A673 (cell line): ENCODE measurements at regions of chr9 and their contacts with region 1.

Region 1: DNA sequence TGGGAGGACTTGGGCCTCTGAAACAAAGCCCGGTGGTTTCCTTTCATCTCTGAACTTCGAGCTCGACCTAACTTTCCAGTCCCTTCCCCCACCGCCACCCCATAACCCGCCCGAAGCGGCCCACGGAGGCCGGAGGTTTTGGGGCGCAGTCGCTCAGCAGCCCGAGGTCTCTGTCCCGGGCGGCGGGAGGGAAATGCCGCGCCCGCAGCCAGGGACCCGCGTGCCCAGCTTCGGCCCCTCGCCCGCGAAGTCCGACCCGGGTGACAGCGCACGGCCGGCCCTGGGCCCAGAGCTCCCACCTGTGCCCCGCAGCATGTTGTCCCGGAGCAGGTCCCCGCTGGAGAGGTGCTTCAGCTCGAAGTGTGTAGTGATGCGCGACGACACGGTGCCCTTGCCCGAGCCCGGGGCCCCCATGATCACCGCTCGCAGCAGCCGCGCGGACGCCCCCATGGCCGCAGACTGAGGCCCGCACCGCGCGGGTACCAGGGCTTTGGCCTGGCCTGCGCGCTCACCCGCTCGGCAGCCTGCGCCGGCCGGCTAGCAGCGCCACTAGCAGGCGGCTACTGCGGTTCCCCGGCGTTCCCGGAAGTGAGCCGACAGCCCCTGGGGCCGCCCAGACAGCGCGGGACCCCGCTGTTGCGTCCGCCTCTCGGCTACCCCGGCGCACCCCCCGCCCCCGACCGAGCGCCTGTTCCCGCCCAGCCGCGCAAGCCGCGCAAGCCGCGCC is at the start of gene AK3:
- DNase-seq: peak; percentile 95
- H3K4me3 ChIP-seq: peak within 1 kb of the TSS; percentile 98
- H3K27ac ChIP-seq: peak within 1 kb of the TSS; percentile 93
- H3K4me1 ChIP-seq: peaks cover 19% of the 10 kb centered on the region
- H3K27me3 ChIP-seq: no peaks in the 10 kb centered on the region
- CTCF ChIP-seq: peak; percentile 37; the same call in 1 of the 2 replicates
- total RNA-seq, gene AK3: 93.1 and 93.6 TPM in 2 replicates

Region 2: GRCh38 chr9:4604678-4605095 is 136.1 kb before region 1 on chr9:
- CTCF ChIA-PET with region 1: no interaction called
- POLR2A ChIA-PET with region 1: no interaction called
- intact Hi-C with region 1: loop called (anchors 10 kb)
- DNase-seq: peak; percentile 88
- H3K4me3 ChIP-seq: no peak overlapping the region
- H3K27ac ChIP-seq: peak overlapping the region; percentile 67
- H3K4me1 ChIP-seq: no peaks in the 10 kb centered on the region
- H3K27me3 ChIP-seq: no peaks in the 10 kb centered on the region
- CTCF ChIP-seq: peak; percentile 83

Region 3: GRCh38 chr9:4662108-4662988 is 78.5 kb before region 1 on chr9 and contains the start of gene PLPP6:
- CTCF ChIA-PET with region 1: interaction called, 3 read pairs
- POLR2A ChIA-PET with region 1: no interaction called
- intact Hi-C with region 1: loop called (anchors 2 kb)
- DNase-seq: peak; percentile 93
- H3K4me3 ChIP-seq: peak within 1 kb of the TSS; percentile 79
- H3K27ac ChIP-seq: peak within 1 kb of the TSS; percentile 98
- H3K4me1 ChIP-seq: peaks cover 28% of the 10 kb centered on the region
- H3K27me3 ChIP-seq: no peaks in the 10 kb centered on the region
- CTCF ChIP-seq: peak; percentile 57
- total RNA-seq, gene PLPP6: 30.9 and 39.5 TPM in 2 replicates

Region 4: DNA sequence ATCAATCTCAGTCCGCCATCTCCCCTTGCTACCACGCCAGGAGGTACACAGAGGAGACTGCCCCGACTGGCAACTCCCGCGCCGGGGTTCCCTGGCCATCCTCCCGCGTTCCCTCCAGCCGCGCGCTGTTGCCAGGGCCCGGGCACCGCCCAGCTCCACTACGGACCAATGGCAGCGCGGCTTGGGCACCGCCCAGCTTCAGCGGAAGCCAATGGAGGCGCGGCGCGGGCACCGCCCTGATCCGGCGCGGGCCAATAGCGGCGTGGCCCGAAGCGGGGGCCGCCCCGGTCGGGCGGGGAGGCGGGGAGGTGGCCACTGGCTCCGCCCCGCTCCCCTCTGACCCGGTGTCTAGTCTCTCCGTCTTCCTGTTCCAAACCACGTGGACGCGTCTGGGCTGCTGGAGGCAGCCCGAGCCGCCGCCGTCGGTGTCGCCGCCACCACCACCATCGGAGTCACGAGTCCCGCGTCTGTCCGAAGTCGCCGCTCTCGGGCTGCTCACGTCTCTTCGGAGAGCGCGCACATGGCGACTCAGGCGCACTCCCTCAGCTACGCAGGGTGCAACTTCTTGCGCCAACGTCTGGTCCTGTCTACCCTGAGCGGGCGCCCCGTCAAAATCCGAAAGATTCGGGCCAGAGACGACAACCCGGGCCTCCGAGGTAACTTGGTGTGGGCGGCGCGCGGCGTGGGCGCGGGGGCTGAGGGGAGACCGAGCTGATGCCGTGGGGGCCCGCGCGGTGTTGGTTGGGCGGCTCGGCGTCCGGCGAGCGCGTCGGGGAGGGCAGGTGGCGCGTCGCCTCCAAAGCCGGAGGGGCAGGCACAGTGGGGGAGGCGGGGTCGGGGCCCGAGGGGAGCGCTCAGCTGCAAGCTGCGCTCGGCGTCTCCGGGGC is 52.0 kb after region 1 on chr9 and contains the start of gene RCL1:
- CTCF ChIA-PET with region 1: no interaction called
- POLR2A ChIA-PET with region 1: no interaction called
- intact Hi-C with region 1: loop called (anchors 5 kb)
- DNase-seq: peak; percentile 98
- H3K4me3 ChIP-seq: peak within 1 kb of the TSS; percentile 93
- H3K27ac ChIP-seq: peak within 1 kb of the TSS; percentile 78
- H3K4me1 ChIP-seq: peaks cover 10% of the 10 kb centered on the region
- H3K27me3 ChIP-seq: no peaks in the 10 kb centered on the region
- CTCF ChIP-seq: no peak
- total RNA-seq, gene RCL1: 29.1 and 31.2 TPM in 2 replicates

Region 5: DNA sequence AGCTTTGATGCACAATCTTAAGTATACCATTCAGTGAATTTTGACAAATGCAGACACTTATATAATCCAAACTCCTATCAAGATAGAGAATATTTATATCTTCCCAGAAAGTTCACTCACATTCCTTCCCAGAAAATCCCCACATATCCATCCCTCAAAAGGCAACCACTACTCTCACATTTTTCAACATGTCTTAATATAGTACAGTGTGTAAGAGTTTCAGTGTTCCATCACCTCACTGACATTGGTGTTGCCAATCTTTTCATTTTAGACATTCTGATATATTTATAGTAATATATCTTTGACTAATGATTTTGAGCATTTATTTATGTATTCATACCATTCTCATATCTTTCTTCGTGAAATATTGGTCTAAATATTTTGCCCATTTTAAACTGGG is 206.1 kb after region 1 on chr9:
- CTCF ChIA-PET with region 1: no interaction called
- POLR2A ChIA-PET with region 1: no interaction called
- intact Hi-C with region 1: no loop called
- DNase-seq: no peak
- H3K4me3 ChIP-seq: no peak overlapping the region
- H3K27ac ChIP-seq: no peak overlapping the region
- H3K4me1 ChIP-seq: no peaks in the 10 kb centered on the region
- H3K27me3 ChIP-seq: no peaks in the 10 kb centered on the region
- CTCF ChIP-seq: no peak